ENCODE measurements at regions of chr19 and their contacts with region 1.

Region 1: GRCh38 chr19:16185123-16185767 is at the start of gene FAM32A:
- DNase-seq: peak; percentile 99 to 100
- H3K4me3 ChIP-seq: peak within 1 kb of the TSS; percentile 73 to 100
- H3K27ac ChIP-seq: peak within 1 kb of the TSS; percentile 82 to 95
- H3K4me1 ChIP-seq: peaks cover 0 to 28% (median 18%) of the 10 kb centered on the region in 4 donors
- H3K27me3 ChIP-seq: no peaks in the 10 kb centered on the region
- CTCF ChIP-seq: peak; percentile 26 to 29

Region 2: DNA sequence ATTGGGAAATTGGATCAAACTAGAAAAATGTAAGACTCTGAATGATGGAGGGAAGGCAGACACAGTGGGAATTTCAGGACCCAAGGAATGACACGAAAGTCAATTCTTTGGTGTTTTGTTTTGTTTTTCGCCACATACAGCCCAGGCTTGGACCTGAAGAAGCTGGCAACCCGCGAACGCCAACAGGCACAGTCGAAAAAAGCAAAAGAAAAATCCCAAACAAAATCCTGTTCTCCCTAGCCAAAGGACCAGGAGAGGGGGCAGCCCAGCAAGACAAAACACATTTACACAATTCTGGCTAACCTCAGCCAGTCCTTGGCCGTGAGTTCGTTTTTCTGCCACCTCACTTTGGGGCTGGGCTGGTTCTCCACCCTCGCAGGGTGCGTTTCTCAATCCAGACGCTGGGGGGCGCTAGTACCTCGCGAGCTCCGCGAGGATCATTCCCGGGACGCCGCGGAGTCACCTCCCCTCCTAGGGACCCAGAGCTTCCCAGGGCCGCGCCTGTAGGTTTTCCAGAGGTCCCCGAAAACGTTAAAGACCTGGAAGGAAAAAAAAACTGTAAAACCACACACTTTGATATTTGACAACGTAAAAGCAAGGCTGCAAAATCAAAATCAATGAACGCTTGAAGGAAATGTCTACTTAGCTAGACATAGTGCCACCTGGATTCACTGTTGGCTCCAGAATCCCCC is 143.8 kb before region 1 on chr19:
- intact Hi-C with region 1: loop called (anchors 1 kb)
- DNase-seq: peak; percentile 69 to 89
- H3K4me3 ChIP-seq: peak overlapping the region; percentile 23 to 24
- H3K27ac ChIP-seq: peak overlapping the region; percentile 33 to 51
- H3K4me1 ChIP-seq: peaks cover 0 to 15% (median 5%) of the 10 kb centered on the region in 4 donors
- H3K27me3 ChIP-seq: no peaks in the 10 kb centered on the region
- CTCF ChIP-seq: peak; percentile 97 to 99

Region 3: DNA sequence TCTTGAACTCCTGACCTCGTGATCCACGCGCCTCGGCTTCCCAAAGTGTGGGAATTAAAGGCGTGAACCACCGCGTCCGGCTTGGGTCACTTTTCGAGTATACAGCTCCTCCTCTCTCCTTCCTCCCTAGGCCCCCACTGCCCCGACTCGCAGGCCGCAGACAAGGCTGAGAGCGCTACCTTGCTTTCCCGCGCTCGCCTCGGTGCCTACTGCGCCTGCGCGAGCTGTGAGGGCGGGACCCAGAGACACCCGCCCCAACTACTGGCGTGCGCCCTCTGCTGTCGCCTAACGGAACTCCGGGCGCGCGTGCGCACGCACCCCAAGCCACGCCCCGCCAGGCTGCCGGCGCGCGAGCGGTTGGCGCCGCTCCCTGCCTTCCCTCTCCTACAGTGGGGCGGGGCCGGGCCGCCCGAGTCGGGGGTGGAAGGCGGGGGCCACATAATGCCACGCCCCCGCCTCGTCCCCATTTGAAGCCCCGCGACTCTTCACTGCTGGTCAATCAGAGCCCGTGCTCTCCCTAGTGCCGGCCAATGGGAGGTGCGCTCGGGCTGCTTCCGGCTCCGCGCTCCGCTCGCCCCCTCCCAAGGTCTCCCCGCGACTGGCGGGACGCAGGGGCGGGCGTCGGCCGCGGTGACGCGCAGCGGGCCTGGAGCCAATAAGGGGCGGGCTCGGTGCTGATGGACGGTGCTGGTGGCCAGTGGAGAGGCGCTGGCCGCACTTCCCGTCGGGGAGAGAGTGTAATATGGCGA is 73.9 kb before region 1 on chr19 and contains the start of gene RAB8A:
- intact Hi-C with region 1: loop called (anchors 10 kb)
- DNase-seq: peak; percentile 99 to 100
- H3K4me3 ChIP-seq: peak within 1 kb of the TSS; percentile 88 to 96
- H3K27ac ChIP-seq: peak within 1 kb of the TSS; percentile 87 to 97
- H3K4me1 ChIP-seq: peaks cover 0 to 49% (median 31%) of the 10 kb centered on the region in 4 donors
- H3K27me3 ChIP-seq: no peaks in the 10 kb centered on the region
- CTCF ChIP-seq: peak; percentile 98 to 100

Measured in tibial artery (tissue), 4 donors.